ENCODE measurements at regions of chr1 and their contacts with region 1.

Region 1: DNA sequence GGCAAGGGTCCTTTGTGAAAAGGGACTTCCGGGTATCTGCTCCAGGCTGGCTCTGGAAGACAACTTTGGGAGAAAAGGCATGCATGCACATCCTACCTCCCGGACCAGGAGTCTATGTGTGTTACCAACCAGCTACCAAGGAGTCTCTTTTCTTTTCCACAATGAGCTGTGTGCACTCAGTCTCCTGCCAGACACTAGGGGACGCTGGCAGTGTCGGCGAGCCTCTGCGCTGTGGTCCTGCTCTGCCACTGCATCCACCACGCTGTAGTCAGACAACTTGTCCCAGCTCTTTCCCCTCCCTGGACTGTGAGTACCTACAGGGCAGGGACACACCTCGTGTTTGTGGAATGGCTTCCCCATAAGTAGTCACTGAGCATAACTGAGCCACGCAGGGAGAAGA is 5.1 kb upstream of the SSR2 start:
- DNase-seq: peak; percentile 45
- ATAC-seq: peak; percentile 95
- H3K4me3 ChIP-seq: no peak overlapping the region
- H3K27ac ChIP-seq: no peak overlapping the region
- H3K4me1 ChIP-seq: 0 out of 2 replicates have a peak, but pooled peaks cover 1% of the 10 kb centered on the region
- H3K27me3 ChIP-seq: no peaks in the 10 kb centered on the region
- CTCF ChIP-seq: peak; percentile 76
- POLR2A ChIP-seq: no peak
- RAD21 ChIP-seq: peak; percentile 64

Region 2: DNA sequence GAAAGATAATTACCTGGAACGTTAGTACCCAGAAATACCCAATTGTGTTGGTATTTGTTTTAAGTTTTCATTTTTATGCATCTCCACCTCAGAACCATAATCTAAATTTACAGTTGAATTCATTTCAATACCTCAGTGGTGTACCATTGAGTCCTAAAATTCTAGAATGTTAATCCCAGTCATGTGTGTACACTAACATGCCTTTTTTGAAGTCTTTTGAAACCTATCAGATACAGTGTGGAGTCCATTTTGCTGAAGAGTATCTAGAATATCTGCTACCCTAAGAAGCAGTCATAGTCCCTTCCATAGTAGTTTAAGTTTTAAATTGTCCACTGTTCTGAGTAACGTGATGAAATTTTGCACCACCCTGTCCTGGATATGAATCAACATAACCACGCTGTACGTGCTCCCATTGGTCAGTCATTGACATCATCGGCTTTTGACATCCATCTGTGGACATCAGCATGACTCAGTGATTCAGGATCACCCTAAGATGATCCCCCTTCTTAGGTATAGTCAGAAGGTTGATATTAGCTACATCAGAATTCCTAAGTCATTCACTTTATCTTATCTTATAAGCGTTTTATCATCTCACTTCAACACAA is 455.8 kb before region 1 on chr1:
- CTCF ChIA-PET with region 1: no interaction called
- POLR2A ChIA-PET with region 1: no interaction called
- dilution Hi-C with region 1: no loop called
- in situ Hi-C with region 1: no loop called
- intact Hi-C with region 1: no loop called
- DNase-seq: peak; percentile 91
- ATAC-seq: peak; percentile 53
- H3K4me3 ChIP-seq: no peak overlapping the region
- H3K27ac ChIP-seq: no peak overlapping the region
- H3K4me1 ChIP-seq: no peaks in the 10 kb centered on the region
- H3K27me3 ChIP-seq: no peaks in the 10 kb centered on the region
- CTCF ChIP-seq: no peak
- POLR2A ChIP-seq: no peak
- RAD21 ChIP-seq: no peak

Region 3: GRCh38 chr1:156042828-156043227 is 17.0 kb after region 1 on chr1:
- CTCF ChIA-PET with region 1: interaction called, 6 read pairs
- POLR2A ChIA-PET with region 1: interaction called, 10 read pairs
- dilution Hi-C with region 1: no loop called
- in situ Hi-C with region 1: no loop called
- intact Hi-C with region 1: no loop called
- DNase-seq: no peak
- ATAC-seq: no peak
- H3K4me3 ChIP-seq: no peak overlapping the region
- H3K27ac ChIP-seq: no peak overlapping the region
- H3K4me1 ChIP-seq: peaks cover 5% of the 10 kb centered on the region
- H3K27me3 ChIP-seq: no peaks in the 10 kb centered on the region
- CTCF ChIP-seq: no peak
- POLR2A ChIP-seq: no peak
- RAD21 ChIP-seq: no peak

Region 4: GRCh38 chr1:156054500-156055280 is 28.8 kb after region 1 on chr1 and contains the start of gene LAMTOR2:
- CTCF ChIA-PET with region 1: no interaction called
- POLR2A ChIA-PET with region 1: no interaction called
- dilution Hi-C with region 1: no loop called
- in situ Hi-C with region 1: no loop called
- intact Hi-C with region 1: loop called (anchors 2 kb)
- DNase-seq: peak; percentile 94
- ATAC-seq: peak; percentile 81
- H3K4me3 ChIP-seq: peak within 1 kb of the TSS; percentile 83
- H3K27ac ChIP-seq: peak within 1 kb of the TSS; percentile 90
- H3K4me1 ChIP-seq: peaks cover 4% of the 10 kb centered on the region; the same call in 1 of the 2 replicates
- H3K27me3 ChIP-seq: no peaks in the 10 kb centered on the region
- CTCF ChIP-seq: no peak
- POLR2A ChIP-seq: peak; percentile 49
- RAD21 ChIP-seq: no peak
- total RNA-seq, gene LAMTOR2: 45.8 and 50.0 TPM in 2 replicates

Region 5: GRCh38 chr1:156065212-156065611 is 39.3 kb after region 1 on chr1:
- CTCF ChIA-PET with region 1: interaction called, 5 read pairs
- POLR2A ChIA-PET with region 1: no interaction called
- dilution Hi-C with region 1: no loop called
- in situ Hi-C with region 1: no loop called
- intact Hi-C with region 1: loop called (anchors 1 kb)
- DNase-seq: no peak
- ATAC-seq: no peak
- H3K4me3 ChIP-seq: no peak overlapping the region
- H3K27ac ChIP-seq: no peak overlapping the region
- H3K4me1 ChIP-seq: peaks cover 5% of the 10 kb centered on the region
- H3K27me3 ChIP-seq: no peaks in the 10 kb centered on the region
- CTCF ChIP-seq: no peak
- POLR2A ChIP-seq: no peak
- RAD21 ChIP-seq: no peak

Measured in IMR-90 (cell line).